Activated CD4-positive, alpha-beta T cell treated with anti-CD3 and anti-CD28 coated beads for 36 hours (primary cell): ENCODE measurements at regions of chr20 and their contacts with region 1.

Region 1: GRCh38 chr20:36773597-36774390 is at the start of gene DSN1:
- DNase-seq: peak; percentile 99
- ATAC-seq: peak; percentile 91
- H3K4me3 Mint-ChIP-seq: peak within 1 kb of the TSS; percentile 79
- H3K27ac Mint-ChIP-seq: peak within 1 kb of the TSS; percentile 97
- H3K4me1 Mint-ChIP-seq: peaks cover 13% of the 10 kb centered on the region
- H3K27me3 Mint-ChIP-seq: no peaks in the 10 kb centered on the region
- total RNA-seq, gene DSN1: 20.4 to 20.7 TPM

Region 2: DNA sequence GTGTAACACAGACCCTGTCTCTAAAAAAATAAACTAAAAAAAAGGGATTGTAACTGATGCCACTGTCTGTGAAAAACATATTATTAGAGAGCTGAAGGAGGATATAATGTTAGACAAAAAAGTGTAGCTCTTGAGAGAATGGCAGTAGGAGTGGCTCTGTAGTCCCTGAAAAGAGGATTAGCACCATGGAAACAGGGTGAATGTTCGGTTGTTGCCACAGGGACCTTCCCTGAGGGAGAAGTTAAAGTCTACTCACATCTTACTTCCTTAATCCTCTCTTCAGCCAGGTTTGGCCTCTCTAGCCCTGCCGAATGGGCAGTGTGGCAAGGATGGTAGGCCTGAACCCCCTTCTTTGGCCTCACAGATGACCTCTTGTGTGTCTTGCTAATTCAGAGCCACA is 831.6 kb before region 1 on chr20:
- CTCF ChIA-PET with region 1: no interaction called
- POLR2A ChIA-PET with region 1: no interaction called
- intact Hi-C with region 1: no loop called
- DNase-seq: no peak
- ATAC-seq: no peak
- H3K4me3 Mint-ChIP-seq: no peak overlapping the region
- H3K27ac Mint-ChIP-seq: no peak overlapping the region
- H3K4me1 Mint-ChIP-seq: peaks cover under 1% of the 10 kb centered on the region
- H3K27me3 Mint-ChIP-seq: no peaks in the 10 kb centered on the region

Region 3: DNA sequence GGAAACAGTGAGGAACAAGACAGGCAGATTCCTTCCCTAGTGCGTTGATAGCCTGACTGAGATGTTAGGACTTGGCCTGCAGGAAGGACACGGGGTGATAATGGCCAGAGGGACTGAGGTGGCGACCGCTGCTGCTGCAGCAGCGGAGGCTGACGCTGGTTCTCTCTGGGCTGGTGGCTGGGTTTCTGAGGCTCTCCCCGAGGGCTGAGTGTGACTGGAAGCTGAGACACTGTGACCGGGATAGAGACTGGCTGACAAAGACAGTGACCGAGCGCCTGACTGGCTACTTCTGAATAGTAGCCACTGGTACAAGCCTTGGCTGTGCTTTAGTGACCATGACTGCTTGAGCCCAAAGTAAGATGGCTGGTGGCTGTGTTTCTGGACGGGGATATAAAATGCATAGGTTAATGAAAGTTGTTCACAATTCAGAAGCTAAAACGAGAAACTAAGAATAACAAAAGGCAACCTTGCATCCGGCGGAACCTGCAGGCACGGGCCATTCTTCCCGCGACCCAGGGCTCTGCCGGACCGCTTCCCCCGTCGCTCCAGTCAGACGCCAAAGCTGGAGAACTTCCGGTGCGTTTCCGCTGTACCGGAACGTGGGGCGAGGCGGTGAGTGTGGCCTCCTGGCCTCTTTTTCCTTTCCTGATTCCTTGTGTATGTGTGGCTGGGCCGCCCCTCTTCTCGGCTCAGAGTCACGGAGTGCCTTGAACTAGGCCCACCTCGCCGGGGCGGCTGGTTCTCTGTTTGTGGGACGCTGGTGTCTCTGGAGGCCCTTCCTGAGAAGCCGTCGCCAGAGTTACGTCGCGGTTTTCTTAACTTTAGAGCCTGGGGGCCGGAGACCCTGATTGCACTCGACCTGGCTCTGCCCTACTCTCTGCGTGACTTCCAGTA is 537.7 kb before region 1 on chr20 and contains the start of gene AAR2:
- CTCF ChIA-PET with region 1: no interaction called
- POLR2A ChIA-PET with region 1: no interaction called
- intact Hi-C with region 1: loop called in 1 of 2 experiments (anchors 5 kb)
- DNase-seq: peak; percentile 91
- ATAC-seq: peak; percentile 99
- H3K4me3 Mint-ChIP-seq: peak within 1 kb of the TSS; percentile 78
- H3K27ac Mint-ChIP-seq: peak within 1 kb of the TSS; percentile 81
- H3K4me1 Mint-ChIP-seq: peaks cover 32% of the 10 kb centered on the region
- H3K27me3 Mint-ChIP-seq: no peaks in the 10 kb centered on the region
- total RNA-seq, gene AAR2: 18.7 to 20.7 TPM

Region 4: GRCh38 chr20:36645998-36646397 is 127.8 kb before region 1 on chr20 and contains the start of gene SLA2:
- CTCF ChIA-PET with region 1: interaction called, 3 read pairs
- POLR2A ChIA-PET with region 1: no interaction called
- intact Hi-C with region 1: loop called in 1 of 2 experiments (anchors 1 kb)
- DNase-seq: peak; percentile 79
- ATAC-seq: peak; percentile 62
- H3K4me3 Mint-ChIP-seq: peak within 1 kb of the TSS; percentile 81
- H3K27ac Mint-ChIP-seq: peak within 1 kb of the TSS; percentile 99
- H3K4me1 Mint-ChIP-seq: peaks cover 41% of the 10 kb centered on the region
- H3K27me3 Mint-ChIP-seq: no peaks in the 10 kb centered on the region
- total RNA-seq, gene SLA2: 48.7 to 52.6 TPM

Region 5: GRCh38 chr20:36861875-36862801 is 88.3 kb after region 1 on chr20:
- CTCF ChIA-PET with region 1: interaction called, 3 read pairs
- POLR2A ChIA-PET with region 1: no interaction called
- intact Hi-C with region 1: loop called in 1 of 2 experiments (anchors 1 kb)
- DNase-seq: no peak
- ATAC-seq: no peak
- H3K4me3 Mint-ChIP-seq: peak overlapping the region; percentile 37
- H3K27ac Mint-ChIP-seq: no peak overlapping the region
- H3K4me1 Mint-ChIP-seq: peaks cover 10% of the 10 kb centered on the region
- H3K27me3 Mint-ChIP-seq: peaks cover 21% of the 10 kb centered on the region

Region 6: DNA sequence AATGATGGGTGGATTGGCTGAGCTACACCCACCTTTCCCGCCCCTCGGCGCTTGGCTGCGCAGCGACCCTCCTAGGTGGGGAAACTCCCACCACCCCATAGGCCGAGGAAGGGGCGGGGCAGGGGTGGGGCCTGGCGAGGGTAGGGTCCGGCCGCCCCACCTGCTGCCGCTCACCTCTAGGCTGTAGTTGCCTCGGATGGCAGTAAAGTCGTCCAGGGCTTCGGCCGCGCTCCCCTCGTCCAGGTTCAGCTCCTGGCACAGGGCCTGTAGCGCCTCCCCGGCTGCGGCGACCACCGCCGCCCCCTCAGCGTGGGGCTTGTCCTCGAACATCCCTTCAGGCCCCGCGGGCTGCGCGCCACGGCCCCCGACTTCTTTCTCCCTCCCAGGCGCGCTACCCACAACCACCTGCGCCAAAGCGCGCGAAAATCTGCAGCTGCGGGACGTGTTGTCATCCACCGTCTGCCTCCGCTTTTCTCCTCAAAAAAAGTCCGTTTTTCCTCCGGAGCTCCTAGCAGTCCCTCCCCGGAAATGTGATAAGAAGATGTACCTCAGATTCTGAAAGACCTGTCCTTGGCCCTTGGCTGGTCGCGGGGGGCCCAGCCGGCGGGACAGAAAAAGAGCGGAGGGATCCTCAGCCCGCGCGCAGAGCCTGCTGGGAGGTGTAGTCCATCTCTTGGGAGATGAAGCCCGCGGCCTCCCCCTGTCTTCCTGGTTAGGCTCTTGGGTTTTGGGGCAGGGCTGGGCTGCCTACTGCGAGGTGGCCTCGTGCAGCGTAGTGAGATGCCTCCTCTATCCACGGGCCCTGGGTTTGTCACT is 322.0 kb after region 1 on chr20 and contains the start of gene RBL1:
- CTCF ChIA-PET with region 1: no interaction called
- POLR2A ChIA-PET with region 1: no interaction called
- intact Hi-C with region 1: loop called in 1 of 2 experiments (anchors 1 kb)
- DNase-seq: peak; percentile 94
- ATAC-seq: peak; percentile 83
- H3K4me3 Mint-ChIP-seq: peak within 1 kb of the TSS; percentile 95
- H3K27ac Mint-ChIP-seq: peak within 1 kb of the TSS; percentile 100
- H3K4me1 Mint-ChIP-seq: peaks cover 26% of the 10 kb centered on the region
- H3K27me3 Mint-ChIP-seq: no peaks in the 10 kb centered on the region
- total RNA-seq, gene RBL1: 39.5 to 43.2 TPM